Naive thymus-derived CD4-positive, alpha-beta T cell (primary cell): ENCODE measurements at regions of chr16 and their contacts with region 1.

Region 1: DNA sequence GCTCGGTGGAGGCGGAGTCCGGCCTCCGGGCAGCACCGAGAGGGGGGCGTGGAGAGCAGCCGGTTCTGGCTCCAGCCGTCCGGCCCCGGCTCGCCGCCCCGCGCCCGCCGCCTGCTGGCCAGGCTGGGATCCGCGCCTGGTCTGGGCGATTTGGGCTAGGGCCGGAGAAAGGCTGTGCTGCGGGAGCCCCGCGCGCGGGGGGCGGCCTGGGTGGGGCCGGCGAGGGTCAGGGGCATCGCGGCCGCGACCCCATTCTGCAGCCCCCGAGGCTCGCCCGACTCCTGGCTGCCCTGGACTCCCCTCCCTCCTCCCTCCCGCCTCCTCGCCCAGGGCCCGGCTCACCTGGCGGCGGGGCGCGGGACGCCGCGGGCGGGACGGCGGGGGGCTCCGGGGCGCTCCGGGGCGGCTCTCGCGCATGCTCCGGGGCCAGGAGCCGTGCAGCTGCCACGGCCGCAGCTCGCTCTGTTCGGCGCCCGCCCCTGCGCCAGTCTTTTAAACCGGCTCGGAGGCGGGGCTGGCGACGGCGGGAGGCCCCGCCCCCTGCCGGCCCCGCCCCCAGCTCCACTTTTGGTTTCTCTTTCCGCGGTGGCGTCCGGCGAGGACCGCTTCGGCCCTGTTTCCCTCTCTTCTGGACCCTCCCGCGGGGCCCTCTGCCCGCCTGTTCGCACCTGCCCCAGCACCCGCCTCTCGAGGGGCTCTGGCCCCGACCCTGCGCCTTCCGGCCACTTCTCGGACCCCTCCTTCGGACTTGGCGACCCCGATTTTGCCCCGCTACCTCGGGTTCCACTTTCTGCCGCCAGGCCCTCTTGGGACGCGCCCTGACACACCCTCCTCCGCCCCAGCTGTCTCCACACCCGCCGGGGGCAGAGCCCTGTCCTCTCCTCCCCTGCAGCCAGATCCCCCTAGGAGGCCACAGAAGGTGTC is at the start of gene SOCS1:
- DNase-seq: peak; percentile 76 to 97 (median 87)
- ATAC-seq: peak; percentile 82
- H3K4me3 ChIP-seq: peak within 1 kb of the TSS; percentile 85
- H3K4me3 Mint-ChIP-seq: peak within 1 kb of the TSS; percentile 91 to 98 (median 94)
- H3K27ac ChIP-seq: peak within 1 kb of the TSS; percentile 97
- H3K27ac Mint-ChIP-seq: peak within 1 kb of the TSS; percentile 88 to 97 (median 96)
- H3K4me1 ChIP-seq: peaks cover 48 to 52% of the 10 kb centered on the region in 2 donors
- H3K4me1 Mint-ChIP-seq: peaks cover 19 to 64% (median 59%) of the 10 kb centered on the region in 7 donors
- H3K27me3 ChIP-seq: no peaks in the 10 kb centered on the region
- H3K27me3 Mint-ChIP-seq: peaks cover 0 to 4% (median 0%) of the 10 kb centered on the region in 5 donors
- total RNA-seq, gene SOCS1: 12.8 to 191 (median 46.8) TPM

Region 2: DNA sequence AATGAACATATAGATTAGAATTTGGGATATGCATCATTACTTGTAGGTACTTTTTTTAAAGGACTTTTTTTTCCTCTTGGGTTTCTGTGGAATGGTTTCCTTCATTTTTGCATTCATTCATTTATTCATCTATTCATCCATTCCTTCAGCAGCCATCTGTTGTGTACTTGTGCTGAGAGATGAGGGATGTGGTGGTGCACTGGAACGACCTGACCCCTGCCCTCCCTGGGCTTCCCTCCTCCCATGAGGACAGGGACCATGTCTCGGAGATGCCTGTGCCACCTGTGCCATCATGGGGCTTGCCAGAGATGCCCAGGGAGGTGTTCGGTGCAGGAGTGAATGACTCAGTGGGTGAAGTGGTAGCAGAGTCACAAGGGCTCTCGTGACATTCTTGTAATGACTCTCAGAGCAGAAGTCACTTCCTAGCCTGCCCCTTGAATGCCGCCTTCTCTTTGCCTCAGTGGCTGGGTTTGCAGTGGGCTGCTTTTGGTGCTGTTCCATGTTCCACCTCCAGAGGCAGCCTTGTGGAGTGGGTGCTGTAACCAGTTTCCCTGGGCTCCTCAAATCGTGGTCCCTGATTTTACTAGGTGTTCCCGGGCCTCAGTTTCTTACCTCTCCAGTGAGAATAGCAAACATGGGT is 267.7 kb before region 1 on chr16:
- CTCF ChIA-PET with region 1: interaction called, 3 read pairs
- POLR2A ChIA-PET with region 1: interaction called, 7 read pairs
- intact Hi-C with region 1: loop called in 1 of 2 experiments (anchors 1 kb)
- DNase-seq: peak in 1 of 9 donors; percentile 71
- ATAC-seq: peak; percentile 51
- H3K4me3 ChIP-seq: no peak overlapping the region
- H3K4me3 Mint-ChIP-seq: peak overlapping the region; percentile 45 to 90 (median 68)
- H3K27ac ChIP-seq: no peak overlapping the region
- H3K27ac Mint-ChIP-seq: peak overlapping the region in 8 of 9 donors; percentile 2 to 80 (median 59)
- H3K4me1 ChIP-seq: peaks cover 20 to 22% of the 10 kb centered on the region in 2 donors
- H3K4me1 Mint-ChIP-seq: peaks cover 37 to 84% (median 40%) of the 10 kb centered on the region in 7 donors
- H3K27me3 ChIP-seq: no peaks in the 10 kb centered on the region
- H3K27me3 Mint-ChIP-seq: no peaks in the 10 kb centered on the region

Region 3: DNA sequence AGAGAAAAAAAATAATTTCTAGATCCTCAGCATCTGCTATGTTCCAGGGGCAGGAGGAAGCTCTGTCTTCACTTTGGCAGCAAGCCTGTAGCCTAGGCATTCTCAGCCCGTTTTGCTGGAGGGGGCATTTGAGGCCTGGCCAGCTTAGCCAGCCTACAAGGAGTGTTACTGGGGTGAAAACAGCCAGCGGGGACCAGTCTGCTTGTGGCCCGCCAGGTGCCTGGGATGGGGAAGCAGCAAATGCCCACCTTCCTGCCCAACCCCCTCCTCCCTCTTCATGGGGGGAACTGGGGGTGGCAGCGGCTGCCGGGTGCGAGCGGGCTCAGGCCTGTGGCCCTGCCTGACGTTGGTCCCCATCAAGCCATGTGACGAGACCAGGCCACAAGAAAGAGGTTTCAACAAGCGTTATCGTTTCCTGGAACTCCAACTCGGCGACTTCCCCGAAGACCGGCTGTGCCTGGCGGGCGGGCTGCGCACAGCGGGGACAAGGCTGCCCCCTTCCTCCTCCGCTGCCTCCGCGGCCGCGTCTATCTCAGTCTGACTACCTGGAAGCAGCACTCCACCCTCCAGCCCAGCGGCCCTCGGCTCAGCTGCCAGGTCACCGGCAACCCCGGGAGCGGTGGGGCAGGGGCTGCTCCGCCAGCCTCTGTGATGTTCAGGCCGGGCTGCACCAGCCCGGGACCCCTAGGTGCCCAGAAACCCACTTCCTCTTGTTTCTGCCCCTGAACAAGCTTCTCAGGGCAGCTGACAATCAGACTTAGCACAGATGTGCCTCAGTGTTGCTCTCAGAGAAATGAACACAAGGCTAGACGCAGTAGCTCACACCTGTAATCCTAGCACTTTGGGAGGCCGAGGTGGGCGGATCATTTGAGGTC is 22.9 kb before region 1 on chr16:
- CTCF ChIA-PET with region 1: interaction called, 16 read pairs
- POLR2A ChIA-PET with region 1: interaction called, 244 read pairs
- intact Hi-C with region 1: loop called (anchors 1 kb)
- DNase-seq: peak; percentile 64 to 90 (median 85)
- ATAC-seq: peak; percentile 89
- H3K4me3 ChIP-seq: peak overlapping the region; percentile 50
- H3K4me3 Mint-ChIP-seq: peak overlapping the region; percentile 60 to 84 (median 76)
- H3K27ac ChIP-seq: peak overlapping the region; percentile 89
- H3K27ac Mint-ChIP-seq: peak overlapping the region; percentile 82 to 98 (median 97)
- H3K4me1 ChIP-seq: peaks cover 34 to 42% of the 10 kb centered on the region in 2 donors
- H3K4me1 Mint-ChIP-seq: peaks cover 45 to 86% (median 64%) of the 10 kb centered on the region in 7 donors
- H3K27me3 ChIP-seq: no peaks in the 10 kb centered on the region
- H3K27me3 Mint-ChIP-seq: no peaks in the 10 kb centered on the region

Region 4: DNA sequence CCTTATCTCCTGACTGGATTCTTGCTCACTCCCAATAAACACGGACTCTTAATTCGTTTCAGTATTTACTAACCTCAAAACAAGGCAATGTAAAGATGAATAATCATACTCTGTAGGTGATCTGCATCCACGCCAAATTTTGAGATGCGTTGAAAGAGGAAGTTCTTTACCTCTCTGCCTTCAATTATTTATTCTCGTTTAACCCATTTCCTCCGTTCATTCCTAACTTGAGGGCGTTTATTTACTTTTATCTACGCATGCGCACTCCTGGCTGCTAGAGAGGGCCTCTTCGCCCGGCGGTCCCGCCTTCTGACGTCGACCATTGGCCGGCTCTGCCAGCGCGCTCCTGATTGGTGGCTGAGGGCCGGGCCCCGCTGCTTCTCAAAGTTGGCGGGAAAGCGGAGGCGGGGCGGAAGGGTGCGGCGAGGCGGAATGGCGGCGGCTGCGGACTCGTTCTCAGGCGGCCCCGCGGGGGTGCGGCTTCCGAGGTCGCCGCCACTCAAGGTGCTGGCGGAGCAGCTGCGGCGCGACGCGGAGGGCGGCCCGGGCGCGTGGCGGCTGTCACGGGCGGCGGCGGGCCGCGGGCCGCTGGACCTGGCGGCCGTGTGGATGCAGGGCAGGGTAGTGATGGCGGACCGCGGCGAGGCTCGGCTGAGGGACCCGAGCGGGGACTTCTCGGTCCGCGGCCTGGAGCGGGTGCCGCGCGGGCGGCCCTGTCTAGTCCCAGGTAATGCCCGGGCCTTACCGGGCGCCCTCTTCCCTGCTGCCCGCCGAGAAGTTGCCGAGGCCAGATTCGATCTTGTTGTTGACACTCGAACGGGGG is 89.3 kb after region 1 on chr16 and contains the start of gene RMI2:
- CTCF ChIA-PET with region 1: no interaction called
- POLR2A ChIA-PET with region 1: interaction called, 6 read pairs
- intact Hi-C with region 1: loop called (anchors 1 kb)
- DNase-seq: peak; percentile 90 to 98 (median 95)
- ATAC-seq: peak; percentile 99
- H3K4me3 ChIP-seq: peak within 1 kb of the TSS; percentile 44
- H3K4me3 Mint-ChIP-seq: peak within 1 kb of the TSS; percentile 79 to 98 (median 92)
- H3K27ac ChIP-seq: peak within 1 kb of the TSS; percentile 65
- H3K27ac Mint-ChIP-seq: peak within 1 kb of the TSS; percentile 58 to 99 (median 83)
- H3K4me1 ChIP-seq: no peaks in the 10 kb centered on the region
- H3K4me1 Mint-ChIP-seq: peaks cover 10 to 49% (median 24%) of the 10 kb centered on the region in 7 donors
- H3K27me3 ChIP-seq: no peaks in the 10 kb centered on the region
- H3K27me3 Mint-ChIP-seq: no peaks in the 10 kb centered on the region
- total RNA-seq, gene RMI2: 1.8 to 57.0 (median 3.3) TPM

Region 5: DNA sequence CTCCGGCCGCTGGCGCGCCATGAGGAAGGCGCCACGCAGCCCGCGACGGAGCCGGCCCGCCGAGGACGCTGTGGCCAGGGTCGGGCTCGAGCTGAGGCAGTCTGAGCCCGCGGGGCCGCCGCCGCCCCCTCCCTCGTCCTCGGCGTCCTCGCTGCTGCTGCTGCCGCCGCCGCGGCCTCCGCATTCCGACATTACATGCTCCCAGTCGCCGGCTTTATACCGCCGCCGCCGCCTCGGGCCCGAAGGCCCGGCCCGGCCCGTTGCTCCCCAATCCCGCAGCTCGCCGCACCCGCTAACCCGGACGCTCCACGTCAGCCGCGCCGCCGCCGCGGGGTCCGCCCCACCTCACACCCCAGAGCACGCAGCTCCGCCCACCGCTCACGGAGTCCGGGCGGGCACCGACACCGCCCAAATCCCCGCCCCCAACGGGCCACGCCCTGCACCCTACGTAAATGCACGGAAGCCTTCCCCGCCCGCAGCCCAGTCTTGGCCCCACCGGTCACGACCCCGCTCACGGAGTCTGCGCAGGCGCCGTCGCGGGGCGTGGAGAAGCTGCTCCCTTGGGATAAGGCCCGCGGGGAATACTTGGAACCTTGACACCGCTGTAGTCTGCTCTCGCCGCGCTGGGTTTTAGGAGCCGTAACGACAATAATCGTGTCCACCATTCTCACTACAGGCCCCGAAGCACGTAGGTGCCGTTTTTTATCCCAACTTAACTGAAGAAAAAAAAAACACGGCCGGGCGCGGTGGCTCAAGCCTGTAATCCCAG is 486.7 kb after region 1 on chr16 and contains the start of gene TXNDC11:
- CTCF ChIA-PET with region 1: no interaction called
- POLR2A ChIA-PET with region 1: no interaction called
- intact Hi-C with region 1: loop called in 1 of 2 experiments (anchors 1 kb)
- DNase-seq: peak; percentile 98 to 100 (median 100)
- ATAC-seq: peak; percentile 98
- H3K4me3 ChIP-seq: peak within 1 kb of the TSS; percentile 92
- H3K4me3 Mint-ChIP-seq: peak within 1 kb of the TSS; percentile 91 to 98 (median 94)
- H3K27ac ChIP-seq: peak within 1 kb of the TSS; percentile 90
- H3K27ac Mint-ChIP-seq: peak within 1 kb of the TSS; percentile 91 to 99 (median 98)
- H3K4me1 ChIP-seq: peaks cover 26 to 28% of the 10 kb centered on the region in 2 donors
- H3K4me1 Mint-ChIP-seq: peaks cover 39 to 55% (median 51%) of the 10 kb centered on the region in 7 donors
- H3K27me3 ChIP-seq: no peaks in the 10 kb centered on the region
- H3K27me3 Mint-ChIP-seq: no peaks in the 10 kb centered on the region
- total RNA-seq, gene TXNDC11: 41.2 to 80.5 (median 55.1) TPM

Region 6: DNA sequence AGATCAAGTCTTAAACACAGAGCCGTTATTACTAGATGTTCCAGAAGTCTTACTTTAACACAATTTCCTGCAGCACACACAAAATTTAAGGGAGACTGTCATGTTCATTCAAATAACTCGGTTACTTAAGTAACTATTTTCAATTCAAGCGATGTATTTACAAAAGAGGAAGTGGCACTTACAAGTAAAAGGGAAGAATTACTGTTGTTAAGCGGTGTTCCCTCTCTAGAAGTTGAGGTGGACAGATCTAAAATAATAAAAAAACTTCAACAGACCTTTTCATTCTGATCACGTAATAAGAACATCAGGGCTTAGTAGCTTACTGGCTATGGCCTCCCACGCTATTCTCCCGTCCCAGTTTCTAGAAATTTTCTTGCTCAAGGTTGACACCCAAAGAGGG is 512.9 kb after region 1 on chr16:
- CTCF ChIA-PET with region 1: no interaction called
- POLR2A ChIA-PET with region 1: no interaction called
- intact Hi-C with region 1: no loop called
- DNase-seq: no peak
- ATAC-seq: no peak
- H3K4me3 ChIP-seq: no peak overlapping the region
- H3K4me3 Mint-ChIP-seq: peak overlapping the region in 9 of 10 donors; percentile 6 to 43 (median 36)
- H3K27ac ChIP-seq: peak overlapping the region; percentile 22
- H3K27ac Mint-ChIP-seq: peak overlapping the region; percentile 15 to 81 (median 70)
- H3K4me1 ChIP-seq: peaks cover 0 to 10% of the 10 kb centered on the region in 2 donors
- H3K4me1 Mint-ChIP-seq: peaks cover 8 to 23% (median 12%) of the 10 kb centered on the region in 7 donors
- H3K27me3 ChIP-seq: no peaks in the 10 kb centered on the region
- H3K27me3 Mint-ChIP-seq: no peaks in the 10 kb centered on the region

Region 7: DNA sequence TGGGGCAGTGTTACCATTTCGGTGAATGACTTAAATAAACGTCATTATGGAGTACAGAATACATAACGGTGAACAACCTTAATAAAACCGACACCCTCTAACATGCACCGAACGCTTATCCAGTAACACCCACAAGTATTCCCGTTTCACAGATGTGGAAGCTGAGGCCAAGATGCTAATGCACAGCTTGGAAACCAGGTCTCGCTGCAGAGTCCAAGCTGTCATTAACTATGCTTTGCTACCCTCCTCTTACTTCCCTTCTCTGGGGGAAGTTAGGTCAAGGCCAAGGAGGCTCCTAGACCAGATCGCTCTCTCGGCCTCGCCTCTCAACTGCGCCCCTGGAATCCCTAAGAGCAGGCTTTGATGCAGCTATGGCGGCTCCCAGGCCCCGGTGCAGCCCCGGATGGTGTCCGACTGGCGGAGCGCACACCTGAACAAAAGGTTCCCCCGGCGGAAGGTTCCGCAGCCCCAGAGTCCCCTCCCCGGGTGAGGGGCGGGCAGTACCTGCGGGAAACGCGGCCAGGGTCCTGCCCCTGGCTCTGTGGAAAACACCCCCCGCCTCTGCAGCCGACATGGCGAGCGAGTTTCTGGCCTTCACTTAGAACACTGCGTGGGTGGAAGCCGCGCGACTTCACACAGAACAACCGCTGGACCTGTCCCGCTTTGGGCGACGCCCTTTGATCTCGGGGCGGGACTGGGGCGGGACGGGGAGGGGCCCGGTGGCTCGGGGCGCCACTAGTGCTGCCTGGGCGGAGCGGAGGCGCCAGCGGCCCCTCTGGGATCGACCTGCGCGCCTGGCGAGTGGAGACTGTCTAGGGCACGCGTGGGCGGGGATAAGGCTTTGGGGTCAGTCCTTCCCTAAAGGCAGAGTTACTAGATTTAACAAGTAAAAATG is 1547.5 kb after region 1 on chr16 and contains the start of gene CPPED1:
- CTCF ChIA-PET with region 1: no interaction called
- POLR2A ChIA-PET with region 1: no interaction called
- intact Hi-C with region 1: loop called in 1 of 2 experiments (anchors 5 kb)
- DNase-seq: peak; percentile 85 to 98 (median 91)
- ATAC-seq: peak; percentile 95
- H3K4me3 ChIP-seq: peak within 1 kb of the TSS; percentile 76
- H3K4me3 Mint-ChIP-seq: peak within 1 kb of the TSS; percentile 86 to 96 (median 90)
- H3K27ac ChIP-seq: peak within 1 kb of the TSS; percentile 71
- H3K27ac Mint-ChIP-seq: peak within 1 kb of the TSS; percentile 59 to 92 (median 91)
- H3K4me1 ChIP-seq: peaks cover 3 to 9% of the 10 kb centered on the region in 2 donors
- H3K4me1 Mint-ChIP-seq: peaks cover 9 to 37% (median 22%) of the 10 kb centered on the region in 7 donors
- H3K27me3 ChIP-seq: no peaks in the 10 kb centered on the region
- H3K27me3 Mint-ChIP-seq: peaks cover 0 to 8% (median 0%) of the 10 kb centered on the region in 5 donors
- total RNA-seq, gene CPPED1: 2.4 to 56.5 (median 5.3) TPM